PC-3 (cell line): ENCODE measurements at regions of chr21 and their contacts with region 1.

Region 1: DNA sequence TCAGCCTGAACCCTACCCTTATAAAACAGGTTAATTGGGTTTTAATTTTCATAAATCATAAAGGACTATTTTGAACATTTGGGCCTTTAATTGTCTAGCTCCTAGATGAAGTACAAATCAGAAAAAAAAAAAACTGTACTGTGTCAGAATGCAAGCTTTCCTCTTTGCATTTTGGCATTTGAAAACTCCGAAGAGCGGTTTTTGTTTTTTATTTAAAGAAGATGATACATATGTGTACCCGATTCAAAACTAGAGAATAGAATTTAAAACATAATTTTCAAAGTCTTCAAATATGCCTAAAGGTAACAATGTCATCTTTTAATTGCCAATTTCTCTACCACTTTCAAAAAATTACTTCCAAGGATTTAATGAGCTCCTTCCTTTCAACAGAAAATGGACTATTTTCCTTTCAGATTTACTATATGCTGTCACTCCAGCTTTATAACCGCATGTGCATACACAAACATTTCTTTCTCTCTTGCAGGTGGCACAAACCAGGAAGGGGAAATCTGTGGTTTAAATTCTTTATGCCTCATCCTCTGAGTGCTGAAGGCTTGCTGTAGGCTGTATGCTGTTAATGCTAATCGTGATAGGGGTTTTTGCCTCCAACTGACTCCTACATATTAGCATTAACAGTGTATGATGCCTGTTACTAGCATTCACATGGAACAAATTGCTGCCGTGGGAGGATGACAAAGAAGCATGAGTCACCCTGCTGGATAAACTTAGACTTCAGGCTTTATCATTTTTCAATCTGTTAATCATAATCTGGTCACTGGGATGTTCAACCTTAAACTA is 33.7 kb downstream of the MRPL39 start:
- DNase-seq: peak; percentile 97
- ATAC-seq: peak; percentile 98
- H3K4me3 ChIP-seq: peak overlapping the region; percentile 8
- H3K27ac ChIP-seq: peak overlapping the region; percentile 87
- H3K4me1 ChIP-seq: peaks cover 59% of the 10 kb centered on the region
- H3K27me3 ChIP-seq: no peaks in the 10 kb centered on the region
- CTCF ChIP-seq: no peak

Region 2: DNA sequence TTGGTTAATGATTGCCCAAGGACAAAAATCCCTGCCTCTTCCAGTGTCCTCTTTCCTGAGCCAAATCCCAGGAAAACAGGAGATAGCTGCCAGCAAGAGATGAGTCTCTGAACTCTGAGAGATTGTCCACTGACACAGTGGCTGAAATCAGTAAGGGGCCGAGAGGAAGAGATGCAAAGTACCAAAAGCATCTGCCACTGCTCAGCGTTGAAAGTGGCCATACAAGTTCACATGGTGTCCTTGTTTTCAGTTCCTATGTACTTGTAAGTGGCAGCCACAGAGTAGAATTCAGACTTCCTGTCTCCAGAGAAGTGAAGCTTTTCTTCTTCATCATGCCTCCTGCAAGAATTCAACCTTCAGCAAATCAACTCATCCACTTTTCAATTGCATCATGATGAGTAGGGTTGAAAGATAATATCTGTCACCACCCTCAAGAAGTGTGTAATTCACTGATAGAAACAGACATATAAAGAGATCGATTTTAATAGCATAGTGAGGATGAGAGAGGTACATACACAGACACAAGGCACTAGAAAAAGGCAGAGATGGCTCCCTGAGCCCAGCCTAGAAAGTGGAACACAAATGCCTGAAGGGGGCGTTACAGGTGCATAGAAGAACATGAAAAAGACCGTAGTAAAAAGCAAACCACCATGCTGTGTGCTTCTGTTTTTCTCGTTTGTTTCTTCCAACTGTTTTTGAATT is 152.1 kb before region 1 on chr21:
- CTCF ChIA-PET with region 1: no interaction called
- POLR2A ChIA-PET with region 1: no interaction called
- intact Hi-C with region 1: loop called (anchors 5 kb)
- DNase-seq: peak; percentile 78
- ATAC-seq: peak; percentile 93
- H3K4me3 ChIP-seq: no peak overlapping the region
- H3K27ac ChIP-seq: no peak overlapping the region
- H3K4me1 ChIP-seq: no peaks in the 10 kb centered on the region
- H3K27me3 ChIP-seq: no peaks in the 10 kb centered on the region
- CTCF ChIP-seq: peak; percentile 81

Region 3: DNA sequence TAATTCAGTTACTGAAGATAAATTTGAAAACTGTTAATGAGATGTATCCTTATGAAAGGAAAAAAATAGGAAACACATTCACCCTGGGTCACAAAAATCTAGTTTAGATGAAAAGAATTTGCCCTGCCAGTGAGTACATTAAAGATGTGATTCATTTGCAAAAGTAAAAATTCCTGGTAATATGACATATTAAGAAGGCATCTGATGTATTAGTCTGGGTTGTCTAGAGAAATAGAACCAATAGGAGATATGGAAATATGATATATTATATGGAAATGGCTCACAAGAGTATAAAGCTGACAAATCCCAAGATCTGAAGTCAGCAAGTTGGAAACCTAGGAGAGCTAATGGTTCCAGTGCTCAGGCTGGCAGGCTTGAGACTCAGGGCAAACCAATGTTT is 120.1 kb before region 1 on chr21:
- CTCF ChIA-PET with region 1: no interaction called
- POLR2A ChIA-PET with region 1: no interaction called
- intact Hi-C with region 1: loop called (anchors 5 kb)
- DNase-seq: peak; percentile 26
- ATAC-seq: no peak
- H3K4me3 ChIP-seq: no peak overlapping the region
- H3K27ac ChIP-seq: no peak overlapping the region
- H3K4me1 ChIP-seq: peaks cover 24% of the 10 kb centered on the region
- H3K27me3 ChIP-seq: no peaks in the 10 kb centered on the region
- CTCF ChIP-seq: no peak

Region 4: DNA sequence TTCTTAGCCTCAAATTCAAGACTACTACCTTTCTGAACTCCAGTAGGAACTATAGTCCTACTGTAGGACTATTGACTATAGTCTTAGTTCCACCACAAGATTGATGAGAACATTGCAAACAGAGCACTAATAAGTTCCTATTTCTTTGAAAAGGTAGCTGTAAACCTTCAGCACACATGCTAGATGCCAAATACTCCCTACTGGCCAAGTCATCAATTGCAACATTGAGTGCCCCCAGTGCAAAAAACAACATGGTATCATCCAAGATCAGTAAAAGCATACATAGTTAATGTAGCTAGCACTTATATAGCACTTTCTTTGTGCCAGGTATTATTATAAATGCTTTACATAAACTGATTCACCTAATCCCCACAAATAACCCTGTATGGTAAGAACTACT is 66.1 kb before region 1 on chr21:
- CTCF ChIA-PET with region 1: no interaction called
- POLR2A ChIA-PET with region 1: no interaction called
- intact Hi-C with region 1: loop called (anchors 5 kb)
- DNase-seq: peak; percentile 46
- ATAC-seq: peak; percentile 53
- H3K4me3 ChIP-seq: no peak overlapping the region
- H3K27ac ChIP-seq: 0 out of 2 replicates have a peak overlapping the region, but pooled peaks have one; percentile 28
- H3K4me1 ChIP-seq: peaks cover 20% of the 10 kb centered on the region
- H3K27me3 ChIP-seq: no peaks in the 10 kb centered on the region
- CTCF ChIP-seq: peak; percentile 55